Gastrocnemius medialis (tissue), 4 donors: ENCODE measurements at regions of chr7 and their contacts with region 1.

Region 1: GRCh38 chr7:118352854-118353453 is 128.4 kb downstream of the ANKRD7 start:
- DNase-seq: no peak
- ATAC-seq: no peak
- H3K4me3 ChIP-seq: no peak overlapping the region
- H3K27ac ChIP-seq: no peak overlapping the region
- H3K4me1 ChIP-seq: no peaks in the 10 kb centered on the region
- H3K27me3 ChIP-seq: no peaks in the 10 kb centered on the region
- CTCF ChIP-seq: peak in 2 of 5 experiments; percentile 10 to 26
- POLR2A ChIP-seq: no peak

Region 2: DNA sequence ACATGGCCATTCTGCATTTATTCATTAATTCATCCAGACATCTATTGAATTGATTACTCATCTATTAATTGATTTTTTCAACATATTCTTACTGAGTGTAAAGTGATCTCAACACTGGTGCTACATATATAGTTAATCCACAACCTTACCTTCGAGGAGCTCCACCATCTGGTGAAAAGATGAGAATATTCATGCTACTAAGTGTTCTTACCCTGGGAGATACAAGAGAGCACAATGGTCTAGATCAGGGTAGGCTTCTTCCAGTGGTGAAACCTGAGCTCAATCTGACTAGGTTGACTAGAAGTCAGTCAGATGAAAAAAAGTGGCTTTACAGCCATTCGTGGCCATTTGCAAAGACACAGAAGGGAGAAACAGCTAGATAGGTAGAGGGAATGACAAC is 378.9 kb after region 1 on chr7:
- in situ Hi-C with region 1: no loop called
- intact Hi-C with region 1: loop called (anchors 5 kb)
- DNase-seq: no peak
- ATAC-seq: no peak
- H3K4me3 ChIP-seq: no peak overlapping the region
- H3K27ac ChIP-seq: no peak overlapping the region
- H3K4me1 ChIP-seq: no peaks in the 10 kb centered on the region
- H3K27me3 ChIP-seq: no peaks in the 10 kb centered on the region
- CTCF ChIP-seq: no peak
- POLR2A ChIP-seq: no peak

Region 3: DNA sequence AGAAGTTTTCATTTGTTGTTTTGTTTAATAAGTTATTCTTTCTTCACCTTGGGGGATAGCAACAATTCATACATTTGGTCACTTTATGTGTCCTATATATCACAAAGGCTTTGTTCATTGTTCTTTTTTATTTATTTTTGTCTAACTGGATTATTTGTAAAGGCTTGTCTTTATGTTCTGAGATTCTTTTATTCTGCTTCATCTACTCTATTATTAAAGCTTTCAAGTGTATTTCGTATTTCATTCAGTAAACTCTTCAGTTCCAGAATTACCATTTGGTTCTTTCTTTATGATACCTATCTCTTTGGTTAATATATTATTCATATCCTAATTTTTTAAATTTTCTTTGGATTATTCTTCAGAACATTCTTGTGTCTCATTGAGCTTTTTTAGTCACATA is 814.5 kb after region 1 on chr7:
- in situ Hi-C with region 1: loop called in 3 of 4 experiments (anchors 5 to 25 kb)
- intact Hi-C with region 1: no loop called
- DNase-seq: no peak
- ATAC-seq: no peak
- H3K4me3 ChIP-seq: no peak overlapping the region
- H3K27ac ChIP-seq: no peak overlapping the region
- H3K4me1 ChIP-seq: no peaks in the 10 kb centered on the region
- H3K27me3 ChIP-seq: no peaks in the 10 kb centered on the region
- CTCF ChIP-seq: no peak
- POLR2A ChIP-seq: no peak

Region 4: DNA sequence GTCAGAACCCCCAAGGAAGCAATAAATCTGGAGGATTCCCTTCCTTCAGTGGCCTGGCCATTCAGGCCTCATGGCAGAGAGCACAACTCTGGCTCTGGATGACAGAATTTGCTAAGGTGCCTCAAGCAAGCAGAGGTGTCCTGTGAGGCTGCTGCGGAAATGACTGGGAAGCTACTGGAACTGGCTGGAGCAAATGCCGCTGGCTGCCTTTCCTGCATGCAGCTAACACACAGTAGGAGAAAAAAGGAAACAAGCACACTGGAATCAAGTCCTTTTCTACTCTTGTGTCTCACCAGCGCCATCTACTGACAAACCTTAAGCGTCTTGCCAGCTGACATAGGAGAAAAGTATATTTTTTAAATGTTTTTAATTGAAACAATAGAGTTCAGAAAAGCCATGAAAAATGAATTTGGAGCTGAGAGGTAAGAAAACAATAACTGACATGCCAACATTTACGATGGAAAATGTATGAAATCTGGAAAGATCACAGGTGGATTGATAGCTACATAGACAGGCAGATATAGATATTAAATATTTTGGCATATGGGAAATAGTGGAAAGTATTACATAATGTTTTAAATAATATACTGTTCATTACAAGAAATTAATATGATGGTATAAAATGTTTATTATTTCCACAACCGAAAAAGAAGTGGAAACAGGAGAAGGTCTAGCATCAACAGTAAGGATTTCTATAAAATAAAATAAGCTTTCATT is 823.1 kb after region 1 on chr7:
- in situ Hi-C with region 1: loop called in 3 of 4 experiments (anchors 5 to 25 kb)
- intact Hi-C with region 1: loop called (anchors 5 kb)
- DNase-seq: no peak
- ATAC-seq: no peak
- H3K4me3 ChIP-seq: no peak overlapping the region
- H3K27ac ChIP-seq: no peak overlapping the region
- H3K4me1 ChIP-seq: no peaks in the 10 kb centered on the region
- H3K27me3 ChIP-seq: no peaks in the 10 kb centered on the region
- CTCF ChIP-seq: peak in 3 of 5 experiments; percentile 20 to 57 (median 53)
- POLR2A ChIP-seq: no peak